A549 (cell line): ENCODE measurements at regions of chr3 and their contacts with region 1.

Region 1: GRCh38 chr3:87298111-87298718 is 21.8 kb upstream of the POU1F1 start:
- DNase-seq: peak; percentile 16 to 73
- ATAC-seq: peak; percentile 50 to 81; a peak in 4 of 6 replicates
- H3K4me3 ChIP-seq: no peak overlapping the region
- H3K27ac ChIP-seq: peak overlapping the region; percentile 33 to 76; a peak in 3 of 6 replicates
- H3K4me1 ChIP-seq: no peaks in the 10 kb centered on the region
- CTCF ChIP-seq: peak; percentile 86
- EP300 ChIP-seq: no peak
- POLR2A ChIP-seq: no peak
- RAD21 ChIP-seq: peak; percentile 91 to 95

Region 2: GRCh38 chr3:87311309-87311708 is 13.1 kb after region 1 on chr3:
- CTCF ChIA-PET with region 1: interaction called, 17 read pairs
- POLR2A ChIA-PET with region 1: no interaction called
- DNase-seq: no peak
- ATAC-seq: peak; percentile 39 to 57; a peak in 3 of 6 replicates
- H3K4me3 ChIP-seq: no peak overlapping the region
- H3K27ac ChIP-seq: peak overlapping the region in 1 of 2 experiments; percentile 69; a peak in 4 of 6 replicates
- H3K4me1 ChIP-seq: peaks cover 19% of the 10 kb centered on the region; the same call in 2 of the 3 replicates
- CTCF ChIP-seq: no peak
- EP300 ChIP-seq: no peak
- POLR2A ChIP-seq: no peak
- RAD21 ChIP-seq: no peak

Region 3: DNA sequence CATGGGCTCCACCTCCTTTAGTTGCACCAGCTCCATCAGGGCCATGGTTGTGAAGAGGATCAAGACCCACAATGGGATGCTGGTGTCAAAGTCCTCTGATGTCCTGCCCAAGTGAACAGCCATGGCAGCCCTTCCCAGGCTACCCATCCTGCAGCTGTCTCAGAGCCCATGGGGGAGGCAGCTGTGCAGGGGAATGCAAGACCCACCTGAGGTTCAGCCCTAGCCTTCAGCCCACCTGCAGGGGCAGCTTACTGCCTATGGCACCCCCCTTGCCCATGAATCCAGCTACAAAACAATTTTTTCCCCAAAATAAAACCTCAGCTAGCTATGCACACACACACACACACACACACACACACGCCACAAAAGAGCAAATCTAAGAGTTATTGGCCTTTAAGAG is 26.4 kb after region 1 on chr3:
- CTCF ChIA-PET with region 1: interaction called, 11 read pairs
- POLR2A ChIA-PET with region 1: no interaction called
- DNase-seq: no peak
- ATAC-seq: no peak
- H3K4me3 ChIP-seq: no peak overlapping the region
- H3K27ac ChIP-seq: peak overlapping the region in 1 of 2 experiments; percentile 15; a peak in 1 of 6 replicates
- H3K4me1 ChIP-seq: peaks cover 16% of the 10 kb centered on the region
- CTCF ChIP-seq: no peak
- EP300 ChIP-seq: no peak
- POLR2A ChIP-seq: no peak
- RAD21 ChIP-seq: no peak

Region 4: DNA sequence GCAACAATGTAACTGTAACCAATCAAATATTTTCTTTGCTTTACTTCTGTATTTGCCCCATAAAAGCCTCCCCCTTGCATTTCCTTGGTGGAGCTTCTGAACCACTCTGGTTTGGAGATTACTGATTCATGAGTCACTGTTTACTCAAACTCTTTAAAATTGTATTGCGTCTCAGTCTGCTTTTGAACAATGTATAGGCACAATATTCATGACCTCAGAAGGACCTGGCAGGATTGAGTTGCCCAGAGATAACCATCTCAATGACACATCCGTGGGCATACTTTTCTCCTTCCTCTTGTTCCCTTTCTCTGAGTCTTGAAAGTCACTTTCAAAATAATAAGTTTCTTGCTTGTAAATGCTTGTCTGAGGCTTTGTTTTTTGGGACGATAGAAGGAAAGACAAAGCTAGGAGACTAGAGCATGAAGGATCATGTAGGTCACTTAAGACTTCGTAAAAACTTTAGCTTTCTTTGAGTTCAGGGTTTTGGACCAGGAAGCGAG is 35.2 kb after region 1 on chr3:
- CTCF ChIA-PET with region 1: interaction called, 12 read pairs
- POLR2A ChIA-PET with region 1: interaction called, 3 read pairs
- DNase-seq: peak; percentile 82 to 98
- ATAC-seq: peak; percentile 97 to 98
- H3K4me3 ChIP-seq: no peak overlapping the region
- H3K27ac ChIP-seq: peak overlapping the region; percentile 96 to 98
- H3K4me1 ChIP-seq: peaks cover 35% of the 10 kb centered on the region
- CTCF ChIP-seq: no peak
- EP300 ChIP-seq: peak; percentile 96 to 98
- POLR2A ChIP-seq: no peak
- RAD21 ChIP-seq: peak; percentile 43 to 72

Region 5: GRCh38 chr3:87503900-87504508 is 205.8 kb after region 1 on chr3:
- CTCF ChIA-PET with region 1: interaction called, 17 read pairs
- POLR2A ChIA-PET with region 1: no interaction called
- DNase-seq: peak; percentile 68 to 86
- ATAC-seq: peak; percentile 67 to 73; a peak in 5 of 6 replicates
- H3K4me3 ChIP-seq: no peak overlapping the region
- H3K27ac ChIP-seq: peak overlapping the region; percentile 6 to 9; a peak in 1 of 6 replicates
- H3K4me1 ChIP-seq: peaks cover 28% of the 10 kb centered on the region; the same call in 2 of the 3 replicates
- CTCF ChIP-seq: peak; percentile 73
- EP300 ChIP-seq: no peak
- POLR2A ChIP-seq: no peak
- RAD21 ChIP-seq: peak; percentile 83 to 91

Region 6: DNA sequence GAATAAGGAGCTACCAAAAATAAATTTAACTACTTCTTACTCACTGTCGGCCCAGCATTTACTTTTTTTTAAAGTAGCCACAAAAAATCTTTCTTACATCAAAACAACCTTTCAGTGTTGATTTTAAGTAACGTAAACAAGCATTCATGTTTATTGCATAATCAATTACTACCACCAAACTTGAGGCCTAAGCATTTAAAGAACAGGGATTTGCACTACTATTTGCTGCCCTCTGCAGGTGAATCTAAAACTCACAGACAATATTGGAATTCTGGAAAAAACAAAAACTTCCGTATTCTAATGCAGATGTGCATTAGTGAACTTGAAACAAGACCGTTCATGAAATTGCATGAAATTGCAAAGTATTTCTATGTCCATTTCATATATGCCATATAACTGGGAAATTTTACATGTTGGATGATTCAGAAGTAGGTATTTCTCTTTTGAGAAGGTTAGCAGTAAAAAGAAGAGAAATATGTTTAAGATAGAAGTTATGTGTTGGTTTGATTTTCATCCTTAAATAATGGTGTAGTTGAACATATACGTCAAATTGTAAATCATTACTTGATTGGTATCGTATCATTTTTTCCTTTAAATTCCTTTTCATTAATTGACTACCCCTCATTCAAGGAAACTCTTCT is 705.0 kb after region 1 on chr3:
- CTCF ChIA-PET with region 1: interaction called, 16 read pairs
- POLR2A ChIA-PET with region 1: no interaction called
- DNase-seq: peak; percentile 25 to 63
- ATAC-seq: peak in 1 of 2 experiments; percentile 56; a peak in 1 of 6 replicates
- H3K4me3 ChIP-seq: no peak overlapping the region
- H3K27ac ChIP-seq: no peak overlapping the region
- H3K4me1 ChIP-seq: 0 out of 3 replicates have a peak, but pooled peaks cover 4% of the 10 kb centered on the region
- CTCF ChIP-seq: peak; percentile 88
- EP300 ChIP-seq: no peak
- POLR2A ChIP-seq: no peak
- RAD21 ChIP-seq: peak; percentile 91 to 93